ENCODE measurements at regions of chr11 and their contacts with region 1.

Region 1: DNA sequence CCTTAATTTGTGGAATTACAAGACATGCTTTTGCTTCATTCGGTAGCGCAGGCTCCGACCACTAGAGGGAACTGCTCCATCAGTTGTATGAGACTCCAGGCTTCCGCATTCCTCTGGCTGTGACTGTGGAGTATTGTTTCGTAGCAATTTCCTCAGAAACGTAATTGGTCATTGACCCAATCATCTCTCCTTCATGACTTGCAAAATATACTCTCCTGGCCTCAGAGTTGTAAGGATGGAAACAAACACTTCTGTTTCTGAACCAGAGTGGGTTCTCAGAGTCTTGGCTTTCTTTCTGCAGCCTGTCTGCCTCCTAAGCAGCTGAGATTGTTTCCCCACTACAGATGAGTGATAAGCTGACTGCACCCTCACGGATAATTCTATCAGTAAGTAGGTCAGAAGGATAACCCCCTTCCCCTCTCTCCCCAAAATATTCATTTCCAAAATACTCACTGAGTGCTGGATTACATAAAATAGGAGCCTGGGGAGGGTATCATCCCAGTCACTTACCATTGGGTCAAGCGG is 146.8 kb upstream of the ZC3H12C start:
- DNase-seq: peak; percentile 91
- ATAC-seq: peak; percentile 96
- H3K4me3 ChIP-seq: peak overlapping the region; percentile 19 to 46
- H3K27ac ChIP-seq: peak overlapping the region; percentile 8; the same call in 1 of the 2 replicates
- H3K4me1 ChIP-seq: peaks cover 0 to 12% of the 10 kb centered on the region in 2 experiments; a peak in 2 of 4 replicates
- H3K27me3 ChIP-seq: no peaks in the 10 kb centered on the region
- CTCF ChIP-seq: peak; percentile 82 to 96 (median 94)
- POLR2A ChIP-seq: no peak
- RAD21 ChIP-seq: peak; percentile 98

Region 2: DNA sequence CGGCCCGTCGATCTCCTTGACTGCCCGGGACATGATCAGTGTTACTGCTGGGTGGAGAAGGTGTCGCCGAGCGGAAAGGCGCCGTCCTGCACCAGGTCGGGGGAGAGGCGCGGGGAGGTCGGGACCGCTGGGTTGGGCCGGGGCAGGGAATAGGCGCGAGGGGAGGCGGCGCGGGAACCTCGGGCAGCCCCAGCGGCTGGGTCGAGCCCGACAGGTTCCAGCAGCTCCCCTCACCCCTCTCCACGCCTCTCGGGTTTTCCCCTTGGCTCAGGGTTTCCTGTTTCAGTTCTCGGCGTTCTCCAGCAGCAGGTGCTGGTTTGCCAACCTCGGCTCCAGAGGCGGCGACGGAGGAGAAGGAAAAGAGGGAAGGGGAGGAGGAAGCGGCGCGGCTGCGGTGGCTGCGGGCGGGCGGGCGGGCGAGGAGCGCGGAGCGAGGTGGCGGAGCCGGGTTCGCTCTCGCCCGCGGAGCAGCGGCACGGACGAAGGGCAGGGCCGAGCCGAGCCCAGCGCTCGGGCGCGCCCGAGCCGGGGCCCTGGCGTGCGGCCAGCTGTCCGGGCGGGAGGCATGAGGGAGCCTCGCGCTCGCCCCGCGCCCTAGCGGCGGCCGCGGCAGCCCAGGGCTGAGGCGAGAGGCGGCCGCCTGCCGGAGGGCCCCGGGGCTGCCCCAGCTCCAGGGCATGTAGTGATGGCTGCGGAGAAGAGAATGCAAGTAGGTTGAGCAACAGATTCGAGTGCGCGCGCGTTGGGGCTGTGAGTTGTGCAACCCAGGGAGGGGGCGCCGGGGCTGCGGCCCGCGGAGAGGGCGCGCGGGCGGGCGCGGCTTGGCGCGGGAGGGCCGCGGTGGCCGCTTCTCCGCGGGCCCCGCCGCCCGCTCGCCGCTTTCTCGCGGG is 146.4 kb after region 1 on chr11 and contains the start of gene ZC3H12C:
- CTCF ChIA-PET with region 1: interaction called, 6 read pairs
- POLR2A ChIA-PET with region 1: no interaction called
- RAD21 ChIA-PET with region 1: no interaction called
- intact Hi-C with region 1: loop called (anchors 2 kb)
- DNase-seq: peak; percentile 77
- ATAC-seq: peak; percentile 79
- H3K4me3 ChIP-seq: peak within 1 kb of the TSS; percentile 69 to 74
- H3K27ac ChIP-seq: peak within 1 kb of the TSS; percentile 89
- H3K4me1 ChIP-seq: peaks cover 22 to 36% of the 10 kb centered on the region in 2 experiments
- H3K27me3 ChIP-seq: no peaks in the 10 kb centered on the region
- CTCF ChIP-seq: peak in 1 of 3 experiments; percentile 41; a peak in 1 of 6 replicates
- POLR2A ChIP-seq: no peak
- RAD21 ChIP-seq: peak; percentile 22; the same call in 1 of the 2 replicates
- total RNA-seq, gene ZC3H12C: 10.2 TPM

Region 3: DNA sequence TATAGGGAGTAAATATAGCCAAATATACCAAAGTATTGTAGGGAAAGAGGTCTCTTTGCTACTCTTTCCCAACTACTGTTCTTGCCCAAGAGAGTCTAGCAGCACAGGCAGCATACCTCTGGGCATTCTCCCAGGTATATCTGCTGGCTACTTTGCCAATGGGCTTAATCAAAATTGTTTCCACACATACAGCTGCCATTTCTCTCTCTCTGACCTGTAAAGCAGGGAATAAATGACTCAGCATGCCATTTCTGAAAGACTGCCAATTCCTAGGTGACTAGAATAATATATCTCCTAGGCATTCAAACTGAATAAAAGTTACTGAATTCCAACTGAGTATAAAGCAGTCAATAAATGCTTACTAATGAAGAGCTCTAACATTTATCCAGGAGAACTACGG is 305.5 kb after region 1 on chr11:
- CTCF ChIA-PET with region 1: no interaction called
- POLR2A ChIA-PET with region 1: no interaction called
- RAD21 ChIA-PET with region 1: no interaction called
- intact Hi-C with region 1: loop called (anchors 10 kb)
- DNase-seq: peak; percentile 73
- ATAC-seq: peak; percentile 81
- H3K4me3 ChIP-seq: peak overlapping the region in 1 of 2 experiments; percentile 17; a peak in 1 of 4 replicates
- H3K27ac ChIP-seq: peak overlapping the region; percentile 70; the same call in 1 of the 2 replicates
- H3K4me1 ChIP-seq: peaks cover 15 to 19% of the 10 kb centered on the region in 2 experiments
- H3K27me3 ChIP-seq: no peaks in the 10 kb centered on the region
- CTCF ChIP-seq: no peak
- POLR2A ChIP-seq: no peak
- RAD21 ChIP-seq: no peak

Region 4: GRCh38 chr11:110376711-110377324 is 430.4 kb after region 1 on chr11:
- CTCF ChIA-PET with region 1: interaction called, 4 read pairs
- POLR2A ChIA-PET with region 1: no interaction called
- RAD21 ChIA-PET with region 1: no interaction called
- intact Hi-C with region 1: loop called (anchors 1 kb)
- DNase-seq: peak; percentile 85
- ATAC-seq: peak; percentile 94
- H3K4me3 ChIP-seq: peak overlapping the region; percentile 27 to 33; a peak in 3 of 4 replicates
- H3K27ac ChIP-seq: peak overlapping the region; percentile 21; the same call in 1 of the 2 replicates
- H3K4me1 ChIP-seq: peaks cover 8% of the 10 kb centered on the region in 2 experiments; a peak in 3 of 4 replicates
- H3K27me3 ChIP-seq: no peaks in the 10 kb centered on the region
- CTCF ChIP-seq: peak; percentile 79 to 93 (median 92)
- POLR2A ChIP-seq: no peak
- RAD21 ChIP-seq: peak; percentile 94

Region 5: DNA sequence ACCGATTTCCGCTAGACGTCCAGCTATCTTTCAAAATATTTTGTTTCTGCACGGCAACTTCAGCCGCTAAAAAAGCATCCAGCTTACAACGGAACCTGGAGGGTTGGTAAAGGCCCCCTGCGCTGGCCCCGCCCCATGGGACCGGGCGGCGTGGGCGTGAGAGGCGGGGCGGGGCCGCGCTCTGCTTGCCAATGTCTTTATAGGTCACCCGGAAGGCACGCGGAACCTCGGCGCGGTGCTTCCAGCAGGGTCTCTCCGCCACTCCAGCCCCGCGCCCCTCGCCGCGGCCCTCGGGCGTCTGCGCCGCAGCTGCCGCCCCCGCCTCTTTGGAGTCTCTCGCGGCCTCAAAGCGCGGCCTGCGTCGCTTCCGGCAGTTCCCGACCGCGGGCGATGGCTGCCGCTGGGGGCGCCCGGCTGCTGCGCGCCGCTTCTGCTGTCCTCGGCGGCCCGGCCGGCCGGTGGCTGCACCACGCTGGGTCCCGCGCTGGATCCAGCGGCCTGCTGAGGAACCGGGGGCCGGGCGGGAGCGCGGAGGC is 483.4 kb after region 1 on chr11 and contains the start of gene FDX1:
- CTCF ChIA-PET with region 1: no interaction called
- POLR2A ChIA-PET with region 1: no interaction called
- RAD21 ChIA-PET with region 1: no interaction called
- intact Hi-C with region 1: loop called (anchors 2 kb)
- DNase-seq: peak; percentile 51
- ATAC-seq: peak; percentile 85
- H3K4me3 ChIP-seq: peak within 1 kb of the TSS; percentile 72 to 89
- H3K27ac ChIP-seq: peak within 1 kb of the TSS; percentile 84
- H3K4me1 ChIP-seq: peaks cover 35 to 50% of the 10 kb centered on the region in 2 experiments
- H3K27me3 ChIP-seq: no peaks in the 10 kb centered on the region
- CTCF ChIP-seq: peak; percentile 4 to 40 (median 32); a peak in 4 of 6 replicates
- POLR2A ChIP-seq: peak; percentile 55
- RAD21 ChIP-seq: no peak
- total RNA-seq, gene FDX1: 14.5 TPM